ENCODE measurements at regions of chr17 and their contacts with region 1.

Region 1: DNA sequence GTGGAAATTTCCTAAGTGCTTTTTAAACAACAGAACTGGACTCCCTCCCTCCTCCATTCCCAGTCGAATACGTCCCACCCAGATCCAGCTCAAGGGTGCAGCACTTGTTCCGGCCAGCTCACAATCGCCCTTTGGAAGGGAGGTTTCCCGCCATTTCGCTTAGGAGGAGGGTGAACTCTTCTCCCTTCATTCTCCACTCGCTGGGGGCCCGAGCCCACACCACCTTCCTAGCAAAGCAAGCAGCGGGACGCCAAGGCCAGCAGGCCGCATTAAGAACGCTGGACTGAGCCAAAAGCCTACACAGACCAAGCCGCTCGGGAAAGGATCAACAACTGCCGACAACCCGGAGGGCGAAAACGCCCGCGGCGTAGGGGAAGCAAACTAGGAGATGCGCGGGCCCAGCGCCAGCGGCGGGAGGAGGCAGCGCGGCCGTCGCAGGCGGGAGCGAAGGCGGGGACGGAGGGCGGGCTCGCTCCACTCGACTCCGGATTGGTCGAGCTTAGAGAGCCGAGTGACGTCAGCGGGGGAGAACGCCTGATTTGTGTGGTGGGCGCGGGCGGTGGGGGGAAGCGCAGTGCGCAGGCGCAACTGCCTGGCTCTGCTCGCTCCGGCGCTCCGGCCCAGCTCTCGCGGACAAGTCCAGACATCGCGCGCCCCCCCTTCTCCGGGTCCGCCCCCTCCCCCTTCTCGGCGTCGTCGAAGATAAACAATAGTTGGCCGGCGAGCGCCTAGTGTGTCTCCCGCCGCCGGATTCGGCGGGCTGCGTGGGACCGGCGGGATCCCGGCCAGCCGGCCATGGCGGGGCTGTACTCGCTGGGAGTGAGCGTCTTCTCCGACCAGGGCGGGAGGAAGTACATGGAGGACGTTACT is at the start of gene PPM1D:
- DNase-seq: peak; percentile 100
- H3K4me3 ChIP-seq: peak within 1 kb of the TSS; percentile 56 to 92 (median 89)
- H3K27ac ChIP-seq: peak within 1 kb of the TSS; percentile 94 to 99 (median 96)
- H3K4me1 ChIP-seq: peaks cover 8 to 13% of the 10 kb centered on the region in 2 donors
- H3K27me3 ChIP-seq: no peaks in the 10 kb centered on the region
- CTCF ChIP-seq: peak in 3 of 6 experiments; percentile 11 to 28 (median 16)
- POLR2A ChIP-seq: peak; percentile 34 to 95
- total RNA-seq, gene PPM1D: 11.3 to 19.5 (median 15.2) TPM

Region 2: DNA sequence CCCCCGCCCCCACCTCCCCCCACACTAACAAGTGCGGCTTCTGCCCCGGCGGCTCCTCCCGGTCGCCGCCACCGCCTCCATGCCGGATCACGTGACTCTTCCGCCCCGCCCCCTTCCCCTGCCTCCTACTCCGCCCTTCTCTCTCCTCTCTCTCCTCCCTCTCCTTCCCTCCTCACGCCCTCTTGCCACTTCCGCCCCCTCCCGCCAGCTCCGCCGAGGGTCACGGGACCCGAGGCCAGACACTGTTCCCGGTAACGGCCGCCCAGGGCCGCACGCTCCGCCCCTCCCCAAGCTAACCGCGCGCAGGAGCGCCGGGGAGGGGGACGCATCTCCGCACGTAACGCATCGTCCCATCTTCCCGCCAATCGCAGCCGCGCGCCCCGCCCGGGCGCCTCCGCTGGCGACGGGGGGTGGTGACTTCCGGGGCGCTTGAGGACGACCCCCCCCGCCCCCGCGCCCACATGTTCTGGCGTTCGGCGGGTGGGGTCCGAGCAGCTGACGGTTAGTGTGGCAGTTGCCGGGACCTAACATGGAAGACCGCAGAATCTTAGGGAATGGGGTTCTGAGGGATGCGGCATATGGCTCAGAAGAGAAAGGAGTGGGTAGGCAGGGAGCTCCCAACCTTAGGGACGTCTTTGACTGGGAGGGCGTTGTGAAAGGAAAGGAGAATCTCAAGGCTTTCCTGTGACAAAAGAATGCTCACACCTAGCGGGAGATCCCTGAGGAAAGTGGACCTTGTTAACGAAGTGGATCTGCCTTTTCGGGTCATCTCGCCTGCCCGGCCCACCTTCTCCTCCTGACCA is 207.6 kb before region 1 on chr17 and contains the start of gene USP32:
- intact Hi-C with region 1: loop called (anchors 5 kb)
- DNase-seq: peak; percentile 98 to 99
- H3K4me3 ChIP-seq: peak within 1 kb of the TSS; percentile 67 to 88 (median 83)
- H3K27ac ChIP-seq: peak within 1 kb of the TSS; percentile 74 to 93 (median 91)
- H3K4me1 ChIP-seq: peaks cover 13 to 35% of the 10 kb centered on the region in 2 donors
- H3K27me3 ChIP-seq: no peaks in the 10 kb centered on the region
- CTCF ChIP-seq: peak in 3 of 6 experiments; percentile 21 to 34 (median 33)
- POLR2A ChIP-seq: peak; percentile 18 to 73
- total RNA-seq, gene USP32: 49.9 to 76.5 (median 65.0) TPM

Region 3: DNA sequence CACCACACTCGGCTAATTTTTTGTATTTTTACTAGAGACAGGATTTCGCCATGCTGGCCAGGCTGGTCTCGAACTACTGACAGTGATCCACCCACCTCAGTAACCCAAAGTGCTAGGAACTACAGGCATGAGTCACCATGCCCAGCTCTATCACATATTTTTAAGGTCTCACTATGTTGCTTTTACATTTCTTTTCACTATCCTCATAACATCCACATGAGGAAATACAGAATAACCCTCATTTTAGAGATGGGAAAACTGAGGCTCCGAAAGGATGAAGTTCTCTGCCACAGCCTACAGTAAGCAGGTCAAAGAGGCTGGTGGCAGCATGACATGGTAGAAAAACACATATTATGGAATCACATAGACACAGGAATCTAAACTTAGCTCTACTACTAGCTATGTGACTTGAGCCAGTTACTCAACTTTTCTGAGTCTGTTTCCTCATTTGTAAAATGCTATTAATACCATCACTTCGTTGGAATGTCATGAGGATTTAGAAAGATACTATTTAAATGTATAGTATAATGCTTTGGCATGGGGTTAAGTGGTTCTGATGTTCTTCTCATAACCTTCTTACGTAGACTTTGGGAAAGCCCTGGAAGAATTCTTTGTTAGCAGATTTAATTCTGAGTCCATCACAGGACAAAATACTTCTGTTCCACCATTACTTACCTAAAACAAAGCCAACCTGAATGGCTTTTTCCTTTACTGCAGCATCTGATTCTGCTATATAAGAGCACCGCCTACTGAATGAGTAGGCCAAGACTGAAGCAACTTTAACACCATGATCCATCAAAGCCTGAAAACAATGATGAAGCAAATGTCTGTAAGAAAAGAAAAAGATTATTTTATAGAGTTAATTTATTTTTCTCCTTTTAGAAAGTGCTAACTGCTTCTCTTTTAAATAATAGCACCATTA is 105.8 kb before region 1 on chr17:
- intact Hi-C with region 1: no loop called
- DNase-seq: no peak
- H3K4me3 ChIP-seq: no peak overlapping the region
- H3K27ac ChIP-seq: no peak overlapping the region
- H3K4me1 ChIP-seq: no peaks in the 10 kb centered on the region
- H3K27me3 ChIP-seq: no peaks in the 10 kb centered on the region
- CTCF ChIP-seq: no peak
- POLR2A ChIP-seq: no peak

Region 4: GRCh38 chr17:60817192-60817591 is 217.3 kb after region 1 on chr17:
- intact Hi-C with region 1: no loop called
- DNase-seq: no peak
- H3K4me3 ChIP-seq: no peak overlapping the region
- H3K27ac ChIP-seq: no peak overlapping the region
- H3K4me1 ChIP-seq: no peaks in the 10 kb centered on the region
- H3K27me3 ChIP-seq: no peaks in the 10 kb centered on the region
- CTCF ChIP-seq: no peak
- POLR2A ChIP-seq: no peak